ENCODE measurements at regions of chrX and their contacts with region 1.

Region 1: DNA sequence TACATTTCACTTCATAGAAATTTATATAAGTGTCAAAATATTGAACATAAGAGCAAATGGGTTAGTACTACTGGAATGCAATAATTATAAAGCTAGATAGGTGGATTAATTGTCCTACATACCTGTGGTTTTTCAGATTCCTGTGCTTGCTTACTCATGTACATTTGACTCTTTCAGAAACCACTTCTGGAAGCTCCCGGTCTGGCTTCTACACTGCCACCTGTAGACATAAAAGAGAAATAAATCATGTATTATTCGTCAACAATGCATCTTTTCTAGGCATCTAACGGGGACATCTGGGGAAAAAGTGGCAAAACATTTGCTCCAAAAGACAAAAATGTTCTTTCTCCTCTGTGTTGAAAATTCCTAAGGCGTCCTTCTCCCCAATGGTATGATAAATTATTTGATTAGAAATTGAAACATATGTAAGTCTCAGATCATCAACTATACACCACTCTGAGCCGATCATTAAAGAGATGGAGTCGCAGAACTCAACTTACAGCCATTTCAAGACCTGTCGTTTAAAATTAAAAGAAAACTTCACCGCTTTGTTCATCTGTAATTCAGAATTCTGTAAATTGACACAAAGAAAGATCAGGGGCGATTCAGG is 648.7 kb upstream of the DIPK2B start:
- DNase-seq: no peak
- ATAC-seq: no peak
- H3K4me3 ChIP-seq: peak overlapping the region in 1 of 4 donors; percentile 46
- H3K27ac ChIP-seq: no peak overlapping the region
- H3K4me1 ChIP-seq: no peaks in the 10 kb centered on the region
- H3K27me3 ChIP-seq: peaks cover 3 to 8% (median 8%) of the 10 kb centered on the region in 3 donors
- CTCF ChIP-seq: peak in 1 of 5 experiments; percentile 24
- POLR2A ChIP-seq: no peak

Region 2: GRCh38 chrX:45806410-45807121 is 42.8 kb before region 1 on chrX:
- in situ Hi-C with region 1: no loop called
- intact Hi-C with region 1: loop called (anchors 5 kb)
- DNase-seq: no peak
- ATAC-seq: no peak
- H3K4me3 ChIP-seq: peak overlapping the region in 3 of 4 donors; percentile 17 to 36 (median 32)
- H3K27ac ChIP-seq: no peak overlapping the region
- H3K4me1 ChIP-seq: no peaks in the 10 kb centered on the region
- H3K27me3 ChIP-seq: no peaks in the 10 kb centered on the region
- CTCF ChIP-seq: no peak
- POLR2A ChIP-seq: no peak